ENCODE measurements at regions of chr6 and their contacts with region 1.

Region 1: DNA sequence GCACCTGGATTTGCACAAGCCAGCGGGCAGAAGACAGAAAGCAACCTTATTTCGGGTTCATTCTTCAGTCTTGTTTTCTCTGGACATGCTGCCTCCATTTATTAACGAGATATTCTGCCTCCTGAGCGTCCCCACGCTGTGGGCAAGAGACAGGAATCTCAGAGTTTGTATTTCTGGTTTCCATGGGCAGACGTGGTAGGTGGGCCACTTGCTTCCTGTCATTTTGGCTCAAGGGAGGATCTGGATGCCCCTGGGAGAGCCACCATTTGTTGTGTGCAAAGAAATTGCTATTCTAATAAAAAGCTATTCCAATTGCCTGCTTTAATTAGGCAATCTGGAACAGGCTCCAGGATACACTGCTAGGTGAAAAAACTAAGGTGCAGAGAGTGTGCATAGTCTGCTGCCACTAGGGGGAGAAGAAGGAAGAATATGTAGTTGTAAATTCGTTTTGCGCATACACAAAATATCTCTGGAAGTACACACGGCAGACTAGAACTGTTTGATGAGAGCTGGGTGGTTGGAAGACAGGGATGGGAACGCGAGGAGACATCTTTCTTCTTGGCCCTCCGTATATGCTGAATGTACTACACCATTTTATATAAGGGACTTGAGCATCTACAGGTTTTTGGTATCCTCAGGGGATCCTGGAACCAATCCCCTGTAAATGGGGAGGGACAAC is 30.1 kb upstream of the SLC16A10 start:
- DNase-seq: peak; percentile 39 to 59
- ATAC-seq: peak; percentile 90 to 95
- H3K4me3 ChIP-seq: no peak overlapping the region
- H3K27ac ChIP-seq: no peak overlapping the region
- H3K4me1 ChIP-seq: no peaks in the 10 kb centered on the region; the same call in 2 of the 3 replicates
- CTCF ChIP-seq: peak; percentile 64
- EP300 ChIP-seq: no peak
- POLR2A ChIP-seq: no peak
- RAD21 ChIP-seq: peak; percentile 67

Region 2: GRCh38 chr6:111041917-111042316 is 15.3 kb before region 1 on chr6:
- CTCF ChIA-PET with region 1: interaction called, 11 read pairs
- POLR2A ChIA-PET with region 1: no interaction called
- DNase-seq: no peak
- ATAC-seq: no peak
- H3K4me3 ChIP-seq: no peak overlapping the region
- H3K27ac ChIP-seq: no peak overlapping the region
- H3K4me1 ChIP-seq: no peaks in the 10 kb centered on the region
- CTCF ChIP-seq: no peak
- EP300 ChIP-seq: no peak
- POLR2A ChIP-seq: no peak
- RAD21 ChIP-seq: no peak

Region 3: DNA sequence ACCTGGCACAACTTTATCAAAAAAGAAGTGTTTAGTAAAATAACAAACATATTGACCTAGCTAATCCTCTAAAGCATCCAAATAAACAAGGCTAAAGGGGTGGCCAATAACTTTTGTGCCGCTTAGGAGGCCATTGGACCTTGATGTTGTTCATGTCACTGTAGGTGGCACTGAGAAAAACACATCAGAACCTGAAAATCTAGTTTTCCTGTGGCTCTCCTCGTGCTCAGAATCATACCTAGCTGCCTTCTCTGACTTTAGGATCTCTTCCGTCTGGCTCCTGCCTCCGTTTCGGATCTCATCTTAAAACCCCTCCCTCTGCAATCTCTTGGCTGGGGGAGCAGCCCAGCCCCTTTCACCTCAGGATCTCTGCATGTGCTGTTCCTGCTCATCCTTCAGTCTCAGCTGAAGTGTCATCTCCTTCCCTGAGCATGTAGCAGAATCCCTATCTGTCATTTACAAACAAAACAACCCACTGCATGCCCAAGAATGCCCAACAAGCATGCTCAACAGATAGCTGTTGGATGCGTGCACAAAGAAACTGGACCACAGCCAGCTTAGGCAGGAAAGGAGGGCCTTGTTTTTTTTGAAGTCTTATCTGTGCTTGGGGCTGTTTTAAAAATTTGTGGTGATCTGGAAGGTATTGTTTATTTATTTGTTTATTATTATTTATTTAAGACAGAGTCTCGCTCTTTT is 11.4 kb after region 1 on chr6:
- CTCF ChIA-PET with region 1: interaction called, 15 read pairs
- POLR2A ChIA-PET with region 1: no interaction called
- DNase-seq: no peak
- ATAC-seq: no peak
- H3K4me3 ChIP-seq: no peak overlapping the region
- H3K27ac ChIP-seq: no peak overlapping the region
- H3K4me1 ChIP-seq: no peaks in the 10 kb centered on the region
- CTCF ChIP-seq: no peak
- EP300 ChIP-seq: no peak
- POLR2A ChIP-seq: no peak
- RAD21 ChIP-seq: no peak

Region 4: GRCh38 chr6:111200350-111201243 is 143.4 kb after region 1 on chr6:
- CTCF ChIA-PET with region 1: interaction called, 10 read pairs
- POLR2A ChIA-PET with region 1: no interaction called
- DNase-seq: no peak
- ATAC-seq: peak in 1 of 2 experiments; percentile 58; a peak in 4 of 6 replicates
- H3K4me3 ChIP-seq: 0 out of 3 replicates have a peak overlapping the region, but pooled peaks have one; percentile 10
- H3K27ac ChIP-seq: peak overlapping the region; percentile 53 to 67
- H3K4me1 ChIP-seq: peaks cover 16% of the 10 kb centered on the region
- CTCF ChIP-seq: no peak
- EP300 ChIP-seq: no peak
- POLR2A ChIP-seq: no peak
- RAD21 ChIP-seq: no peak

Region 5: DNA sequence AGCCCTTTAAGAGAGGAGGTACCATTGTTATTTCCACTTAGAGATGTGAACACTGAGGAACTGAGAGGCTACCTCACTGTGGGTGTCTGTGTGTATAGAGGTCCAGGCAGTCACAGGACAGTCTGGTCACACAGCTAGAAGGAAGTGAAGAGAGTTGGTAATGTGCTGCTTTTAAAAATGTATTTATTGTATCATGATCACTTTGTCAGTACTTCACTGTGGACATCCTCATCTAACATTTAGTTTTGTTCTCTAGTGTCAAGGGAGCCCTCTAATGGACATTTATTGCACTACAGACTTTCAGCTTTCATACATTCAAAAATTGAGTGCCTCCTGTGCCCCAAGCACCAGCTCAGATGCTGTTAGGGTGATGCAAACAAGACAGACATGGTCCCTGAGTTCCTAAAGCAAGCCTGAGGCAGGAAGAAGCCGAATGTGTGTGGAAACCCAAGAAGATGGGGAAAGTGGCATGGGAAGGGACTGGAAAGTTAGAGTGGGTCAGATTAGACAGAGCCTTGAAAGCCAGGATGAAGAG is 153.0 kb after region 1 on chr6:
- CTCF ChIA-PET with region 1: interaction called, 31 read pairs
- POLR2A ChIA-PET with region 1: no interaction called
- DNase-seq: peak; percentile 51 to 54
- ATAC-seq: peak; percentile 78 to 85; a peak in 5 of 6 replicates
- H3K4me3 ChIP-seq: no peak overlapping the region
- H3K27ac ChIP-seq: no peak overlapping the region
- H3K4me1 ChIP-seq: no peaks in the 10 kb centered on the region
- CTCF ChIP-seq: peak; percentile 66
- EP300 ChIP-seq: no peak
- POLR2A ChIP-seq: no peak
- RAD21 ChIP-seq: peak; percentile 73 to 74

Region 6: GRCh38 chr6:111259089-111259831 is 202.0 kb after region 1 on chr6:
- CTCF ChIA-PET with region 1: interaction called, 11 read pairs
- POLR2A ChIA-PET with region 1: no interaction called
- DNase-seq: peak; percentile 89 to 98
- ATAC-seq: peak; percentile 97 to 98
- H3K4me3 ChIP-seq: peak overlapping the region; percentile 77
- H3K27ac ChIP-seq: peak overlapping the region; percentile 78 to 94
- H3K4me1 ChIP-seq: peaks cover 34% of the 10 kb centered on the region
- CTCF ChIP-seq: peak; percentile 76
- EP300 ChIP-seq: no peak
- POLR2A ChIP-seq: peak; percentile 55
- RAD21 ChIP-seq: peak; percentile 75 to 77

Measured in A549 (cell line).